A673 (cell line): ENCODE measurements at regions of chr9 and their contacts with region 1.

Region 1: DNA sequence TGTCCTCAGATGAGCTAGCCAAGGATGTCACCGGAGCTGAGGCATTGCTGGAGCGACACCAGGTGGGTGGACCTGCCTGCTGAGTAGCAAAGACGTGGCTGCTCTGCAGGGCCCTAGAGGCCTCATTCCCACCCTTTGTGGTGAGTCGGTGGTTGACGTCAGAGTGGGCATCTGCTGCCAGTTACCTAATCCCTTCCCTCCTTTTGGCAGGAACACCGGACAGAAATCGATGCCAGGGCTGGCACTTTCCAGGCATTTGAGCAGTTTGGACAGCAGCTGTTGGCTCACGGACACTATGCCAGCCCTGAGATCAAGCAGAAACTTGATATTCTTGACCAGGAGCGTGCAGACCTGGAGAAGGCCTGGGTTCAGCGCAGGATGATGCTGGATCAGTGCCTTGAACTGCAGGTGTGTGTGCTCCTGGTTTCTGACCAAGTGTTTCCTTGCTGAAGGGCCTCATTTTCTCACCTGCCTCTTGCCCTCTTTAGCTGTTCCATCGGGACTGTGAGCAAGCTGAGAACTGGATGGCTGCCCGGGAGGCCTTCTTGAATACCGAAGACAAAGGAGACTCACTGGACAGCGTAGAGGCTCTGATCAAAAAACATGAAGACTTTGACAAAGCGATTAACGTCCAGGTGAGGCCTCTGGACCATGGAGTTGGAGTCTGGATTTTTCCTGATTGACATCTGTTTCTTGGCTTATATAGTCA is 48.9 kb downstream of the DYNC2I2 start:
- DNase-seq: no peak
- H3K4me3 ChIP-seq: no peak overlapping the region
- H3K27ac ChIP-seq: no peak overlapping the region
- H3K4me1 ChIP-seq: no peaks in the 10 kb centered on the region
- H3K27me3 ChIP-seq: no peaks in the 10 kb centered on the region
- CTCF ChIP-seq: no peak

Region 2: DNA sequence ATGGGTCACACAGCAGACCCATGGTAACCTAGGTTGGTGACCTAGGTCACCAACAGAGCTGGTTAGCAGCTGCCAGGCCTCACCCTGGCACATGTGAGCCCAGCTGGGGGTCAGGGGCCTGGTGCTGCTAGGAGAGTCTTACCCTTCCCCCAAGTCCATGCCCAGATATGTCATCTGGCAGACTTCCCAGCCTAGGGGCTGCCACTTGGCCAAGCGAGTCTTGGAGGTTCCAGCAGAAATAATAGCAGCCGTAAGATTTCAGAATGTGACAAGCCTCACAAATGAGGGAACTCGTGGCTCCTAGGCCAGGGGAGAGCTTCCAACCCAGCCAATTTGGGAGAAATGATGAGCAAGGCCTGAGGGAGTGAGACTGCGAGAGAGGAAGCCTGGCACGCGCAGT is 225.6 kb before region 1 on chr9:
- CTCF ChIA-PET with region 1: no interaction called
- POLR2A ChIA-PET with region 1: no interaction called
- intact Hi-C with region 1: no loop called
- DNase-seq: no peak
- H3K4me3 ChIP-seq: no peak overlapping the region
- H3K27ac ChIP-seq: no peak overlapping the region
- H3K4me1 ChIP-seq: peaks cover 21% of the 10 kb centered on the region
- H3K27me3 ChIP-seq: no peaks in the 10 kb centered on the region
- CTCF ChIP-seq: no peak

Region 3: DNA sequence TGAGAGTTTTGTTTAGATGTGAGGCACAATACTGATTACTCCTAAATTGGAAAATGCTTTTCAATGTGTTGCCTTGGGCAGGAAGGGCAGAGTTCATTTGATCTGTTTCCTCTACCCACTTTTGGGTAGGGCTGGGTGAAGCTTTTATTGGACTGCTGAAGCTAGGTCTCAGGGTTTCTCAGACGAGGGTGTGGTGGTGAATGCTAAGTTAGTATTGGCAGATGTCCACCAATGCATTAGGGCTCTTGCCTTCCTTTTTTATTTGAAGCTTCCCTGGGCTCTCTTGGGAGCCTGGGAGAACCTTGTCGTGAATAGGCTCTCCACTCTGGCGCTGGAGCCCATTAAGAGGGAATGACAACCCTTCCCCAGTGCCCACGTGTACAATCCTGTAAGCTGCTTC is 32.3 kb before region 1 on chr9:
- CTCF ChIA-PET with region 1: no interaction called
- POLR2A ChIA-PET with region 1: no interaction called
- intact Hi-C with region 1: loop called (anchors 5 kb)
- DNase-seq: peak; percentile 76
- H3K4me3 ChIP-seq: no peak overlapping the region
- H3K27ac ChIP-seq: peak overlapping the region; percentile 47
- H3K4me1 ChIP-seq: peaks cover 3% of the 10 kb centered on the region
- H3K27me3 ChIP-seq: no peaks in the 10 kb centered on the region
- CTCF ChIP-seq: no peak

Region 4: DNA sequence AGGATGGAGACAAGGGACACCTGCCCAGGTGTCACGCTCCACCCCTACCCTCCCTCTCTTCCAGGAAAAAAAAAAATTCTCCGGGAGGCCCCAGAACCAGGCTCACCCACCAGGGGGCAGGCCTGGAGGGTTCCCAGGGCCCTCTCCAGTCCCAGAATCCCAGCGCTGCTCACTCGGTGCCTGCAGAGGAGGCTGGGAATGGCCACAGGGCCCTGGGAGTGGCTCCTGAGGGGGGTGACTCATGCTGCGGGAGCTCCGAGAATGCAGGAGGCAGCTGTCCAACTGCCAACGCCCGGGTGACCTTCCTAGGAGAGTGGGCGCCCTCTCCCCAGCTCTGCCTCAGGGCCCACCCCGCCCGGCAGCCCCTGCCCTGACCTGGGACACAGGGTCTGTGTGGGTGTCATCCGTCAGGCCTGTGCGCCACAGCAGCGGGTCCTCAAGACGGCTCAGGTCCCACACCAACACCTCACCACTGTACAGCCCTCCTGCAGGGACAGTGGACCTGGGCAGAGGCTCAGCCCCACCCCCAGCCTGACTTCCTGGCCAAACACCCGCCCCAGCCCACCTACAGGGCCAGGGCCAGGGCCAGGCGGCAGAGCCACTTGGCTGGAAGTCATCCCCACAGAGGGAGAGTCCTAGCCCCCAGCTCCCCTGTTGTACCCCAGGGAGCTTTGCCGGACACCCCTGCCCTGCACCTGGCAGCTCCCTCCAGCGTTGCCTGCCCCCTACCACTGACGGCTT is 27.7 kb after region 1 on chr9:
- CTCF ChIA-PET with region 1: no interaction called
- POLR2A ChIA-PET with region 1: interaction called, 14 read pairs
- intact Hi-C with region 1: no loop called
- DNase-seq: peak; percentile 88
- H3K4me3 ChIP-seq: no peak overlapping the region
- H3K27ac ChIP-seq: peak overlapping the region; percentile 54
- H3K4me1 ChIP-seq: no peaks in the 10 kb centered on the region
- H3K27me3 ChIP-seq: no peaks in the 10 kb centered on the region
- CTCF ChIP-seq: peak; percentile 60

Region 5: GRCh38 chr9:129278391-129279237 is 670.8 kb after region 1 on chr9:
- CTCF ChIA-PET with region 1: no interaction called
- POLR2A ChIA-PET with region 1: no interaction called
- intact Hi-C with region 1: no loop called
- DNase-seq: no peak
- H3K4me3 ChIP-seq: no peak overlapping the region
- H3K27ac ChIP-seq: no peak overlapping the region
- H3K4me1 ChIP-seq: no peaks in the 10 kb centered on the region
- H3K27me3 ChIP-seq: no peaks in the 10 kb centered on the region
- CTCF ChIP-seq: no peak